ENCODE measurements at regions of chr17 and their contacts with region 1.

Region 1: GRCh38 chr17:59565171-59565969 is at the start of gene DHX40:
- DNase-seq: peak; percentile 80 to 95 (median 92)
- ATAC-seq: peak; percentile 97
- H3K4me3 ChIP-seq: peak within 1 kb of the TSS; percentile 92
- H3K4me3 Mint-ChIP-seq: peak within 1 kb of the TSS; percentile 97 to 100 (median 100)
- H3K27ac ChIP-seq: peak within 1 kb of the TSS; percentile 95
- H3K27ac Mint-ChIP-seq: peak within 1 kb of the TSS; percentile 98 to 100 (median 100)
- H3K4me1 ChIP-seq: peaks cover 10 to 14% of the 10 kb centered on the region in 2 donors
- H3K4me1 Mint-ChIP-seq: peaks cover 0 to 30% (median 23%) of the 10 kb centered on the region in 7 donors
- H3K27me3 ChIP-seq: no peaks in the 10 kb centered on the region
- H3K27me3 Mint-ChIP-seq: peaks cover 0 to 3% (median 0%) of the 10 kb centered on the region in 5 donors
- total RNA-seq, gene DHX40: 21.3 to 44.9 (median 29.4) TPM

Region 2: DNA sequence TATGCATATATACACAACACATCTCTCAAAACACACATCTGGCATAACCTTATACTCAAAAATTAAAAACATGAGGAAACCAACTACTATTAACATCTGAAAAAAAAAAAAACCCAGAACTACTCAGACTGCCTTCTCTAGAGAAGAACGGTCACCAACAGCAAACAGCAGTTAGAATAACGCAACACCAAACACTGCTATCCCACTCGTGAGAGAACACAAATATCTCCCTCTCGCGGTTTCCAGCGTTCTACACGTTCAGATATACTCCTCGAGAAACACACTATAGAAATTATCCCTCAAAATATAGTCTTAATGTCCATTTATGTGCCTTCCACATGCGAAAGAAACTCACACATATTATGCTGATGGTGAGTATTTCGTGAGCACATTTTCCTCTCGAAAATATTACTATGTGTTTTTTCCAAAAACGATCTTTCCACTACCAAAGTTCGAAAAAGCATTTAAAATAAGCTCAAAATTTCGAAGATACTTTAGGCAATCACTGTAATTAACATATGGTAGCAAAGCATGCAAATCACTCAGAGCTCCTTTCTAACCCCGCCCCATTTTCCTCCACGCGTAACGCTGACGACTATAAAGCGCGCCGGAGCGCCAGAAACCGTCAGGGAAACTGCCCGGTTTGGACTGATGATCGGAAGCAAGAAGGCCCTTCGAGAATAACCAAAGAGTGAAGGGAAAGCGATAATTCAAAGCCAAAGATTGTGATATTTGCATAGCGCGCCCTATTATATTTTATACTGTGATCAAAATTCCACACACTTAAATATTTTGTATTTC is 933.6 kb before region 1 on chr17:
- CTCF ChIA-PET with region 1: no interaction called
- POLR2A ChIA-PET with region 1: no interaction called
- intact Hi-C with region 1: loop called in 1 of 2 experiments (anchors 5 kb)
- DNase-seq: peak; percentile 74 to 95 (median 92)
- ATAC-seq: peak; percentile 90
- H3K4me3 ChIP-seq: peak overlapping the region; percentile 46
- H3K4me3 Mint-ChIP-seq: no peak overlapping the region
- H3K27ac ChIP-seq: peak overlapping the region; percentile 78
- H3K27ac Mint-ChIP-seq: no peak overlapping the region
- H3K4me1 ChIP-seq: peaks cover 6 to 12% of the 10 kb centered on the region in 2 donors
- H3K4me1 Mint-ChIP-seq: peaks cover 0 to 9% (median 5%) of the 10 kb centered on the region in 7 donors
- H3K27me3 ChIP-seq: no peaks in the 10 kb centered on the region
- H3K27me3 Mint-ChIP-seq: peaks cover 0 to 2% (median 0%) of the 10 kb centered on the region in 5 donors

Region 3: GRCh38 chr17:59311130-59311920 is 254.0 kb before region 1 on chr17:
- CTCF ChIA-PET with region 1: no interaction called
- POLR2A ChIA-PET with region 1: no interaction called
- intact Hi-C with region 1: loop called in 1 of 2 experiments (anchors 10 kb)
- DNase-seq: peak in 8 of 9 donors; percentile 38 to 74 (median 63)
- ATAC-seq: peak; percentile 98
- H3K4me3 ChIP-seq: no peak overlapping the region
- H3K4me3 Mint-ChIP-seq: no peak overlapping the region
- H3K27ac ChIP-seq: no peak overlapping the region
- H3K27ac Mint-ChIP-seq: peak overlapping the region in 2 of 9 donors; percentile 29 to 76
- H3K4me1 ChIP-seq: no peaks in the 10 kb centered on the region
- H3K4me1 Mint-ChIP-seq: peaks cover 0 to 7% (median 4%) of the 10 kb centered on the region in 7 donors
- H3K27me3 ChIP-seq: no peaks in the 10 kb centered on the region
- H3K27me3 Mint-ChIP-seq: no peaks in the 10 kb centered on the region

Region 4: DNA sequence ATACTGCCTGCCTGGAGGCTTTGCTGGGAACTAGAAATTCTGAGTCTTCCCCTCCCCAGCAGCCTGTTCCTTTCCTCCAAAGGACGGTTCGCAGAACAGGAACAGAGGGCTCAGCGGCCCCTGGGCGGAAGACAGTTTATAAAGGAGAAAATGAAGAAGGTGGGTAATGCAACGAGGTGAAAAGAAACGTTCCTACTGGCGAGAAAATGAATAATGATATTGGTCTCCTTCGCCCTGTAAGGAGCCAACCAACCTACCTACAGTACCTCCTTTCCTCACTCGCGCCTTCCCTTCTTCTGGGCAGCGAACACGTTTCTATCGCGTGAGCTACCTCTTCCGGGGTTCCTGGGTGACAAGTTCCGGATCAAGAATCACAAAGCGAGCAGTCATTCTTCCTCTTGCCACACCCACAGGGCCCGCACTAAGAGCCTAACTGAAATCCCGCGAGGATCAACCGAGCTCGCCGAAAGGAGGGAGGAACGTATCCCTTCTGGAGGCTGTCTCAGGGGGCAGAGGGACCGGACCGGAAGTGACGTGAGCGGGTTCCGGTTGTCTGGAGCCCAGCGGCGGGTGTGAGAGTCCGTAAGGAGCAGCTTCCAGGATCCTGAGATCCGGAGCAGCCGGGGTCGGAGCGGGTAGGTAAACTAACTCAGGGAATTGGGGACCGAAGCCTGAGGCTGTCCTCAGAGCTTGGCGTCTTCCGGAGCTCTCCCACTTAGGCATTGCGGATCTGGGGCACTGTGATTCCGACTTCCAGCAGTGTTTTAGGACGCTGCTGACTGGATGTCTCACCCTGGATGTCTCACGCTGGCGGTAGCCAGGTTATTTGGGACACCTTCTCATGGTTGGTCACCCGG is 142.0 kb after region 1 on chr17 and contains the starts of genes PTRH2 and VMP1:
- CTCF ChIA-PET with region 1: no interaction called
- POLR2A ChIA-PET with region 1: interaction called, 3 read pairs
- intact Hi-C with region 1: loop called (anchors 5 to 10 kb)
- DNase-seq: peak; percentile 72 to 94 (median 83)
- ATAC-seq: peak; percentile 96
- H3K4me3 ChIP-seq: peak within 1 kb of the TSS; percentile 90
- H3K4me3 Mint-ChIP-seq: peak within 1 kb of the TSS; percentile 97 to 100 (median 99)
- H3K27ac ChIP-seq: peak within 1 kb of the TSS; percentile 90
- H3K27ac Mint-ChIP-seq: peak within 1 kb of the TSS; percentile 96 to 100 (median 99)
- H3K4me1 ChIP-seq: peaks cover 26 to 28% of the 10 kb centered on the region in 2 donors
- H3K4me1 Mint-ChIP-seq: peaks cover 39 to 86% (median 68%) of the 10 kb centered on the region in 7 donors
- H3K27me3 ChIP-seq: no peaks in the 10 kb centered on the region
- H3K27me3 Mint-ChIP-seq: no peaks in the 10 kb centered on the region
- total RNA-seq, gene PTRH2: 6.1 to 24.1 (median 15.0) TPM
- total RNA-seq, gene VMP1: 70.3 to 370 (median 82.5) TPM

Region 5: DNA sequence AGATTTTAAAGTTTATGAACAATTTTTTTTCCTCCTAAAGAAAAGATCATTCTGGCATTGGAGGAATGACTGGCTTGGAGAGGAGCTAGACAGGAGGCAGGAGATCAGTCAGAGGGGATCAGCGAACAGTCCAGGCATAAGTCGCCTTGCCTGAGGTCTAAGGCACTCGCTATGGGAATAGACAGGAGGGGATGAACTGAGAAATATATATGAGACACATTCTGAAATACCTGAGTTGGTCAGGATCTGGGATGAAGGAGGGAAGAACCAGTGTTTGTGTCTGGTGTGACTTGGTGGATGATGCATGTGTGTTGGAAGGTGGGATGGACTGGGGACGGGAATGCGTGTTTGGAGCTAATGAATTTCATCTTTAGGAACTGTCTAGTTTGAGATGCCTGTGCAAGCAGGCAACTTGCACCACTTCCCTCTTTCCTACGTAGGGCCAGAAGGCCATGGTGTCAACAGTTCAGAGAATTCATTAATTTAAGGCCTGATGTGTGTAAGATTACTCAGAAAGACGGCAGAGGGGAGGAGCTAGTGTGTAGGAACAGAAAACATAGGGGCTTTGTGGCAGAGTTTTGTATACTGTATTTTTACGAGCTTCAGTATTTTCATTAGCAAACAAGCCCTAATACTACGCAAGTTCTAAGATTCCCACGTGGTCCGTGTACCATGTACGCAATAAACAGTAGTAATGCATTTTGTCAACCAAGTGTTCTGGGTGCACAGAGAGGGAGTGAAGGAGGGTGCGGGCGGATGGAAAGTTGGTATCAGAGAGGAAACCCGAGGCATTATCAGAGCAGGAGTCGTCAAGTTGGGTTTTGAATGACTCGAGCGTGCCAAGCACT is 512.5 kb after region 1 on chr17:
- CTCF ChIA-PET with region 1: no interaction called
- POLR2A ChIA-PET with region 1: no interaction called
- intact Hi-C with region 1: loop called in 1 of 2 experiments (anchors 10 kb)
- DNase-seq: peak in 5 of 9 donors; percentile 30 to 41 (median 35)
- ATAC-seq: peak; percentile 66
- H3K4me3 ChIP-seq: peak overlapping the region; percentile 82
- H3K4me3 Mint-ChIP-seq: peak overlapping the region; percentile 86 to 97 (median 94)
- H3K27ac ChIP-seq: peak overlapping the region; percentile 70
- H3K27ac Mint-ChIP-seq: peak overlapping the region; percentile 82 to 97 (median 87)
- H3K4me1 ChIP-seq: peaks cover 8 to 14% of the 10 kb centered on the region in 2 donors
- H3K4me1 Mint-ChIP-seq: peaks cover 17 to 41% (median 28%) of the 10 kb centered on the region in 7 donors
- H3K27me3 ChIP-seq: no peaks in the 10 kb centered on the region
- H3K27me3 Mint-ChIP-seq: no peaks in the 10 kb centered on the region

Region 6: GRCh38 chr17:60525685-60526514 is 960.5 kb after region 1 on chr17 and contains the start of gene APPBP2:
- CTCF ChIA-PET with region 1: no interaction called
- POLR2A ChIA-PET with region 1: no interaction called
- intact Hi-C with region 1: loop called in 1 of 2 experiments (anchors 10 kb)
- DNase-seq: peak; percentile 59 to 80 (median 77)
- ATAC-seq: peak; percentile 92
- H3K4me3 ChIP-seq: peak within 1 kb of the TSS; percentile 86
- H3K4me3 Mint-ChIP-seq: peak within 1 kb of the TSS; percentile 98 to 100 (median 99)
- H3K27ac ChIP-seq: peak within 1 kb of the TSS; percentile 99
- H3K27ac Mint-ChIP-seq: peak within 1 kb of the TSS; percentile 96 to 99 (median 98)
- H3K4me1 ChIP-seq: peaks cover 19 to 25% of the 10 kb centered on the region in 2 donors
- H3K4me1 Mint-ChIP-seq: peaks cover 31 to 63% (median 55%) of the 10 kb centered on the region in 7 donors
- H3K27me3 ChIP-seq: no peaks in the 10 kb centered on the region
- H3K27me3 Mint-ChIP-seq: no peaks in the 10 kb centered on the region
- total RNA-seq, gene APPBP2: 24.2 to 47.5 (median 33.0) TPM

Measured in naive thymus-derived CD4-positive, alpha-beta T cell (primary cell).